PC-3 (cell line): ENCODE measurements at regions of chr15 and their contacts with region 1.

Region 1: DNA sequence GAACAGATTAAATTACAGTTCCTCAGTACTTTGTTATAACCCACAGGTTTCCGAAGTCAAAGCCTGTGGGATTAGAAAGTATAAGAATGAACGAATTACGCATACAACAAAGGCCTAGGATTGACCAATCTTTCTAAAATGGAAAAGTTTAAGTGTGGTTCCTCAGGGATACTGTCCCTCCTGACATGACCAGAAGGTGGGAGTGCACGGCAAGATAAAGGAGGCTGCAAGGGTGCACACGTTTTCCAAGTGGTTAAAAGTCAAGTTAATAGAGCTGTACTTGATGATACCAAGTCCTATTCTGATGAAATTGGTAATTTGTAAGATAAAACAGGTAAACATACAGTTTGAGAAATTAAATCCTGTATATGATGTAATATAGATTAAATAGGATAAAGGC is 96.2 kb downstream of the ALDH1A2 start:
- DNase-seq: peak; percentile 49
- ATAC-seq: peak; percentile 88
- H3K4me3 ChIP-seq: no peak overlapping the region
- H3K27ac ChIP-seq: no peak overlapping the region
- H3K4me1 ChIP-seq: no peaks in the 10 kb centered on the region
- H3K27me3 ChIP-seq: no peaks in the 10 kb centered on the region
- CTCF ChIP-seq: peak; percentile 69

Region 2: DNA sequence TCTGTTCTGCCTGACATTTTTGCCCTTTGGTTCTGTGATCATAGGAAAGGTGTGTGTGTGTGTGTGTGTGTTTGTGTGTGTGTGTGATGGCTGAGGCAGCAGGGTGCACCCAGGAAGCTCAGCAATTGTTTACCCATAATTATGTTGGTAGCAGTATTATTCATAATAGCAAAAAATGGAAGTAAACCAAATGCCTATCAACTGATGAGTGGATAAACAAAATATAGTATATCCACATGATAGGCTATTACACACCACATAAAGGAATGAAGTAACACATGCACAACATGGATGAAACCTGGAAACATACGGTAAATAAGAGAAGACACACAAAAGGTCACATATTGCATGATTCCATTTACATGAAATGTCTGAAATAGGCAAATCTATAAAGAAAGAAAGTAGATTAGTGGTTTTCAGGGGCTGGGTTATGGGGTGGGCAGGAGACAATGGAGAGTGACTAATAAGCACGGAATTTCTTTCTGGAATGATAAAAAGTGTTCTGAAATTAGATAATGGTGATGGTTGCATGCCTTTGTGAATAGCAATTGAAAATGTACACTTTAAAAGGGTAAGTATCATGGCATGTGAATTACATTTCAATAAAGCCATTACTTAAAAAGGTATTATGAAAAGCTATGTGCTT is 95.7 kb before region 1 on chr15:
- CTCF ChIA-PET with region 1: no interaction called
- POLR2A ChIA-PET with region 1: no interaction called
- intact Hi-C with region 1: loop called (anchors 5 kb)
- DNase-seq: peak; percentile 69
- ATAC-seq: peak; percentile 79
- H3K4me3 ChIP-seq: no peak overlapping the region
- H3K27ac ChIP-seq: 0 out of 2 replicates have a peak overlapping the region, but pooled peaks have one; percentile 20
- H3K4me1 ChIP-seq: peaks cover 32% of the 10 kb centered on the region
- H3K27me3 ChIP-seq: no peaks in the 10 kb centered on the region
- CTCF ChIP-seq: no peak

Region 3: DNA sequence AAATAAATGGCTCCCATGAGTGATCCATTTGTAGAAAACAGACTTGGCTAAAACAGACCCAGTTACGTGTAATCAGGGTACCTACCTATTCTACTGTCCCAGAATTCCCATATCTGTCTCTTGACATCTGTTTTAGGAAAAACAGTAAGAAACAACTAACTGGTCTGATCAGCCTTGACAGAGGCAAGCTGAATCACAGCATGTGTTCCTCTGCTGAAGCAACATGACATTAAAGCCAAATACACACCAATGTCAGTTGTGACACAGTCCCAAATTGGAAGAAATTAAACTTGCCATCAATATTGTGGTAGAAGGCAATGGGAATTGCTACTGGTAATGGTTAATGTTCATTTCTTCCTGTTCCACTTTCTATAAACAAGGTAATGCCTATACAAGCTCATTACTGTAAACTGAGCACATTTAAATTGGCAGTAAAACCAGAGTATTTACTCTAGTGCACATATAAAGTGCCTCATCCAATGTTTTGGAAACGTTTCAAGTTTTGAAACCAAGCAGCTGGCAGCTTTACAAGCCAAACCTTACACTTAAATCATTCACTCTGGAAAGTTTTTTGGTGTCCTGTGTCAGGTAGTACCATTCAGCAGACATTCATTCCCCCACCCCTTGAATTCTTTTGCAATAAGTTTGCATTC is 69.2 kb after region 1 on chr15:
- CTCF ChIA-PET with region 1: no interaction called
- POLR2A ChIA-PET with region 1: no interaction called
- intact Hi-C with region 1: loop called (anchors 2 kb)
- DNase-seq: peak; percentile 96
- ATAC-seq: peak; percentile 72
- H3K4me3 ChIP-seq: no peak overlapping the region
- H3K27ac ChIP-seq: peak overlapping the region; percentile 80
- H3K4me1 ChIP-seq: peaks cover 47% of the 10 kb centered on the region
- H3K27me3 ChIP-seq: no peaks in the 10 kb centered on the region
- CTCF ChIP-seq: no peak

Region 4: GRCh38 chr15:58070801-58071418 is 101.6 kb after region 1 on chr15:
- CTCF ChIA-PET with region 1: interaction called, 25 read pairs
- POLR2A ChIA-PET with region 1: no interaction called
- intact Hi-C with region 1: loop called (anchors 1 kb)
- DNase-seq: peak; percentile 64
- ATAC-seq: 0 out of 2 replicates have a peak, but pooled peaks have one; percentile 19
- H3K4me3 ChIP-seq: no peak overlapping the region
- H3K27ac ChIP-seq: no peak overlapping the region
- H3K4me1 ChIP-seq: no peaks in the 10 kb centered on the region
- H3K27me3 ChIP-seq: peaks cover 22% of the 10 kb centered on the region; the same call in 1 of the 2 replicates
- CTCF ChIP-seq: peak; percentile 92

Region 5: GRCh38 chr15:58182460-58183163 is 213.3 kb after region 1 on chr15:
- CTCF ChIA-PET with region 1: no interaction called
- POLR2A ChIA-PET with region 1: no interaction called
- intact Hi-C with region 1: loop called (anchors 10 kb)
- DNase-seq: peak; percentile 58
- ATAC-seq: peak; percentile 86
- H3K4me3 ChIP-seq: no peak overlapping the region
- H3K27ac ChIP-seq: no peak overlapping the region
- H3K4me1 ChIP-seq: peaks cover 18% of the 10 kb centered on the region
- H3K27me3 ChIP-seq: no peaks in the 10 kb centered on the region
- CTCF ChIP-seq: peak; percentile 84

Region 6: GRCh38 chr15:58307313-58307961 is 338.1 kb after region 1 on chr15:
- CTCF ChIA-PET with region 1: no interaction called
- POLR2A ChIA-PET with region 1: no interaction called
- intact Hi-C with region 1: no loop called
- DNase-seq: no peak
- ATAC-seq: no peak
- H3K4me3 ChIP-seq: no peak overlapping the region
- H3K27ac ChIP-seq: no peak overlapping the region
- H3K4me1 ChIP-seq: peaks cover 8% of the 10 kb centered on the region; the same call in 1 of the 2 replicates
- H3K27me3 ChIP-seq: no peaks in the 10 kb centered on the region
- CTCF ChIP-seq: no peak